CD8-positive, alpha-beta T cell (primary cell): ENCODE measurements at regions of chr1 and their contacts with region 1.

Region 1: GRCh38 chr1:2133039-2133878 is 61.3 kb downstream of the FAAP20 start:
- DNase-seq: peak; percentile 90 to 99 (median 97)
- ATAC-seq: peak; percentile 89
- H3K4me3 ChIP-seq: peak overlapping the region; percentile 51 to 61
- H3K4me3 Mint-ChIP-seq: peak overlapping the region; percentile 81
- H3K27ac ChIP-seq: peak overlapping the region; percentile 73 to 91
- H3K27ac Mint-ChIP-seq: peak overlapping the region; percentile 90
- H3K4me1 ChIP-seq: peaks cover 11% of the 10 kb centered on the region
- H3K4me1 Mint-ChIP-seq: peaks cover 31% of the 10 kb centered on the region
- H3K27me3 ChIP-seq: no peaks in the 10 kb centered on the region
- H3K27me3 Mint-ChIP-seq: no peaks in the 10 kb centered on the region
- CTCF ChIP-seq: no peak

Region 2: DNA sequence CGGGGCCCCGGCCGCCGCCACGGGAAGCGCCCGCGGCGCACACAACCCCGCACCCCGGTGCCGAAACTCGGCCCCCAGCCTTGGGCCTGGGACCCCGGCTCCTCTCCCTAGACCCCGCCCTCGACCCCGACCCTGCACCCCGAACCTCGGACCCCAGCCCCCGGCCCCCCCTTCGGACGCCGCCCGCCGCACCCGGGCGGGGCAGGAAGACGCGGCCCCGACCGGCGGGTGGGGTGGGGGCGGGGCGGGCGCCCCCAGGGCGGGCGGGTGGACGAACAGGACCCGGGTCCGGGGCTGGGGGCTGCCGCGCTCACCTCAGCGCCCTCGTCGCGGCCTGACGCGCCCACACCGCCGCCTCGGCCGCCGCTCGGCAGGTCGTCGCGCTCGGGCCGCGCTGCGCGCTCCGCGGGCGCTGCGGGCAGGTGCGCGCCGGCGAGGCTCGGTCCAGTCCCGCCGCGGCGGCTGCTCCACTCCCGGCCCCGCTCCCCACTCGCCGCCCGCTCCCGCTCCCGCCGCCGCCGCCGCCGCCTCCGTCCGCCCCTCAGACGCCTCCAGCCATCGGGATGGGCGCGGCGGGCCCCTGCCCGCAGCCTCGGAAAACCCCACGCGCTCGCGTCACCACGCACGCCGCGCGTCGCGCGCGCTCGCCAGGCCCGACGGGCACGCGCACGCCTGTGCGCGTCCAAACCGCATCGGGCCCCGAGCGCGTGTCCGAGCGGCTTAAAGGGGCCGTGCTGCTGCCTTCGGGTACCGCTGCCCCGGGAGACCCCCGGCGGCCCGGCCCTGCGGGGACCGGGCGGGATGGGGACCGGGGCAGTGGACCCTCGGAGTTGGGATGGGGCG is 242.5 kb before region 1 on chr1 and contains the start of gene GNB1:
- CTCF ChIA-PET with region 1: no interaction called
- POLR2A ChIA-PET with region 1: no interaction called
- intact Hi-C with region 1: loop called (anchors 1 kb)
- DNase-seq: peak; percentile 80 to 97 (median 87)
- ATAC-seq: peak; percentile 62
- H3K4me3 ChIP-seq: peak within 1 kb of the TSS; percentile 68 to 69
- H3K4me3 Mint-ChIP-seq: peak within 1 kb of the TSS; percentile 87
- H3K27ac ChIP-seq: peak within 1 kb of the TSS; percentile 70 to 89
- H3K27ac Mint-ChIP-seq: peak within 1 kb of the TSS; percentile 94
- H3K4me1 ChIP-seq: peaks cover 72% of the 10 kb centered on the region
- H3K4me1 Mint-ChIP-seq: peaks cover 60% of the 10 kb centered on the region
- H3K27me3 ChIP-seq: no peaks in the 10 kb centered on the region
- H3K27me3 Mint-ChIP-seq: no peaks in the 10 kb centered on the region
- CTCF ChIP-seq: no peak
- total RNA-seq, gene GNB1: 145 to 147 TPM

Region 3: DNA sequence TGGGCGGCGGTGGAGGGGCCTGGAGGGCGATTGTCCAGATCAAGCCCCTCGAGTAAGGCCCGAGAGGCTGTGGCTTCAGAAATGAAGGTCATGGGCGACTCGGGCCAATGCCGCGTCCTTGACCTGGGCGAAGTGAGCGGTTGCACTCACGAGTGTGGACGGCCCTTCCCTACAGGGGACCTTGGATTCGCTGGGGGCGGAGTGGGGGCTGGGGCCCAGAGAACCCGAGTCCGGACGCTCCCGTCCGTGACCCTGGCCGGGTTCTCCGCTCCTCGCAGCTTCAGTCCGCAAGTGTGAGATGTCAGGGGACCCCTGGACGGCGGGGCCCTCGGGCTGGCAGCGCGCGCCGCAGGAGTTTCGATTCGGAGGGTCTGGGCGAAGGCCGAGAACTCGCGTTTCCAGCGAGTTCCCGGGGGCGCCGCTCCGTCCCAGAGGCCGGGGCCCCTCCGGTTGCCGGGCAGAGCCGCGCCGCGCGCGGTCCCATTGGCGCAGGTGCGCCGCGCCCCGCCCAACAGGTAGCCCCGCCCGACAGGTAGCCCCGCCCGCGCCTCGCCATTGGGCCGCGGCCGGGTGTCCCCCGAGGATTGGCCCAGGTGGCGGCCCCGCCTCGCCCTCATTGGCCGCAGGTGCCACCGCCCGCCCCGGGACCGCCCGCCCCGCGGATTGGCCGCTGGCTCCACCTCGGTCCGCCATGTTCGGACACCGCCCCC is 83.4 kb before region 1 on chr1 and contains the start of gene PRKCZ:
- CTCF ChIA-PET with region 1: interaction called, 3 read pairs
- POLR2A ChIA-PET with region 1: no interaction called
- intact Hi-C with region 1: loop called (anchors 1 kb)
- DNase-seq: peak; percentile 90 to 98 (median 95)
- ATAC-seq: peak; percentile 97
- H3K4me3 ChIP-seq: peak within 1 kb of the TSS; percentile 76 to 88
- H3K4me3 Mint-ChIP-seq: peak within 1 kb of the TSS; percentile 80
- H3K27ac ChIP-seq: peak within 1 kb of the TSS; percentile 33 to 64
- H3K27ac Mint-ChIP-seq: no peak within 1 kb of the TSS
- H3K4me1 ChIP-seq: peaks cover 30% of the 10 kb centered on the region
- H3K4me1 Mint-ChIP-seq: peaks cover 28% of the 10 kb centered on the region
- H3K27me3 ChIP-seq: peaks cover 0 to 5% of the 10 kb centered on the region in 2 experiments
- H3K27me3 Mint-ChIP-seq: no peaks in the 10 kb centered on the region
- CTCF ChIP-seq: no peak
- total RNA-seq, gene PRKCZ: 17.1 to 19.6 TPM

Region 4: GRCh38 chr1:2174348-2175054 is 41.2 kb after region 1 on chr1:
- CTCF ChIA-PET with region 1: interaction called, 11 read pairs
- POLR2A ChIA-PET with region 1: no interaction called
- intact Hi-C with region 1: loop called in 1 of 2 experiments (anchors 1 kb)
- DNase-seq: peak in 4 of 9 experiments; percentile 25 to 62 (median 45)
- ATAC-seq: peak; percentile 56
- H3K4me3 ChIP-seq: no peak overlapping the region
- H3K4me3 Mint-ChIP-seq: no peak overlapping the region
- H3K27ac ChIP-seq: no peak overlapping the region
- H3K27ac Mint-ChIP-seq: no peak overlapping the region
- H3K4me1 ChIP-seq: no peaks in the 10 kb centered on the region
- H3K4me1 Mint-ChIP-seq: no peaks in the 10 kb centered on the region
- H3K27me3 ChIP-seq: no peaks in the 10 kb centered on the region
- H3K27me3 Mint-ChIP-seq: no peaks in the 10 kb centered on the region
- CTCF ChIP-seq: peak; percentile 63

Region 5: DNA sequence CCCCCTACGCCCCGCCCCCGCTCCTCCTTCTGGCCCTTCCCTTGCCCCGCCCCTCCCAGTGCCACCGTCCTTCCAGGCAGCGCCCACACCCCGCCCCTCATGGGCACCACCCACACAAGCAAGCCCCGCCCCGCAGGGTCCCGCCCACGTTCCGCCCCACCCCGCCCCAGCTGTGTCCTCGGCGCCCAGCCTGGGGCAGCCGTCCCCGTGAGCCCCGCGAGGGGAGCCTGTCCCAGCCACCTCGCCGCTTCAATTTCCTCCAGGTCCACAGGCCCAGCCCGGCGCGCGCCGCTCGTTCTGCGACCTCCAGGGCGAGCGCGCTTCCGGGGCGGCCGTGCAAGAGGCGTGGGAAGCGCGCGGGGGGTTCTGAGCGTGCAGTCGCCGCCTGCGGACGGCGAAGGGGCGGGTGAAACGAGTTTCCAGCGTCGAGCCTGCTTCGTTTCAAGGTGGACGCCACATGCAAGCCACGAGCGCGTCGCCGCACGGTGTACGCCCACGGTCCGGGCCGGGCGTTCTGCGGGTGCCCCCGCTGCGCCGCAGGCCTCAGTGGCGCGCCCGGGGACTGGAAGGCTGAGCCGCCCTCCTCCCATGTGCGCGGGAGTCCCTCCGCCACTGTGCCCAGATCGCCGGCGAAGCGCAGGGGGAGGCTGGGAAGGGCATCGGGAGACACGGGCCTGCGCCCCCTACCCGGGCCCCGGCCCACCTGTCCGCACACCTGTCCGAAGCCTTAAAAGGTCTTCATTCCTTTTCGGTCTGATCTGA is 72.1 kb after region 1 on chr1:
- CTCF ChIA-PET with region 1: no interaction called
- POLR2A ChIA-PET with region 1: no interaction called
- intact Hi-C with region 1: loop called (anchors 1 to 2 kb)
- DNase-seq: peak; percentile 91 to 97 (median 95)
- ATAC-seq: peak; percentile 93
- H3K4me3 ChIP-seq: peak overlapping the region; percentile 39 to 61
- H3K4me3 Mint-ChIP-seq: peak overlapping the region; percentile 69
- H3K27ac ChIP-seq: peak overlapping the region; percentile 19 to 47
- H3K27ac Mint-ChIP-seq: no peak overlapping the region
- H3K4me1 ChIP-seq: peaks cover 14% of the 10 kb centered on the region
- H3K4me1 Mint-ChIP-seq: peaks cover 8% of the 10 kb centered on the region
- H3K27me3 ChIP-seq: no peaks in the 10 kb centered on the region
- H3K27me3 Mint-ChIP-seq: no peaks in the 10 kb centered on the region
- CTCF ChIP-seq: no peak

Region 6: GRCh38 chr1:2215909-2216766 is 82.9 kb after region 1 on chr1:
- CTCF ChIA-PET with region 1: no interaction called
- POLR2A ChIA-PET with region 1: no interaction called
- intact Hi-C with region 1: no loop called
- DNase-seq: no peak
- ATAC-seq: no peak
- H3K4me3 ChIP-seq: no peak overlapping the region
- H3K4me3 Mint-ChIP-seq: no peak overlapping the region
- H3K27ac ChIP-seq: no peak overlapping the region
- H3K27ac Mint-ChIP-seq: no peak overlapping the region
- H3K4me1 ChIP-seq: peaks cover 13% of the 10 kb centered on the region
- H3K4me1 Mint-ChIP-seq: peaks cover 4% of the 10 kb centered on the region
- H3K27me3 ChIP-seq: peaks cover 0 to 6% of the 10 kb centered on the region in 2 experiments
- H3K27me3 Mint-ChIP-seq: no peaks in the 10 kb centered on the region
- CTCF ChIP-seq: no peak

Region 7: DNA sequence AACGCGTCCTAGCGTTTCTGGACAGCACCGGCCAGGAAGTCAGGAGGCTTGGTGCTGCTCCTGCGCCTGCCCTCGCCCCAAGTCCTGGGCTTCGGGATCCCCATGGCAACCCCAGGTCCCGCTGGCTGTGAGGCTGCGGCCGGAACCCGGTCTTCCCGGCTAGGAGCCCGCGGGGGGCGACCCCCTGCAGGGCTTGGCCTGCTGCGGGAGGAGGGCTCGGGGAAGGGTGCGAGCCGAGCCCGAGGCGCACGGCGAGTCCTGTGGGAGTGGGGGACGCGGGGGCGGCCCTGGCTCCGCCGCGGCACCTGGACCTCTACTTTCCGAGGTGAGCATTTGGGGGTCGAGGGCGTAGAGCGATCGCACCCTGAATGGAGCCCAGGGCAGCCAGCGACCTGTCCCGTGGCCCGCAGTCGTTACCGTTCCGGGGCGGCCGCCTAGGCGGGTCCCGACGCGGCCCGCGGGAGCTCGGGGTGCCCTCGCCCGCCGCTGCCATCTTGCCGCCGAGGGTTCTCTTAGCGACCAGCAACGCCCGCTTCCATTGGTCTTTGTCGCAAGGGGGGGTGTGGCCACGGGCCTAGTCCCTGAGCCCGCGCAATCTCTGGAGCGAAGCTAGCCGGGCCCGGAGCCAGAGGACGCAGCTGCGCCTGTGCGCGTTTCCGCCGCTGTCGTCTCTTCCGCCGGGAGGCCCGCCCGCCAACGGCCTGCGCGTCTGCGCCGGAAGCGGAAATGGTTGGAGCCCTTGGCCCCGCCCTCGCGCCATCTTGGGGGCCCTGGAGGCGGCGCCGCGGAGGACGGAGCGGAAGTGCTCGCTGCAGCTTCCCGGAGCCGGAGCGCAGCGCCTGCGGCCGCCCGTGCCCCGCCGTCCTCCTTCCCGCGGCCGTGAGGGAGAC is 258.0 kb after region 1 on chr1 and contains the starts of genes MORN1 and RER1:
- CTCF ChIA-PET with region 1: no interaction called
- POLR2A ChIA-PET with region 1: no interaction called
- intact Hi-C with region 1: loop called (anchors 1 to 5 kb)
- DNase-seq: peak; percentile 97 to 100 (median 99)
- ATAC-seq: peak; percentile 95
- H3K4me3 ChIP-seq: peak within 1 kb of the TSS; percentile 57 to 90
- H3K4me3 Mint-ChIP-seq: peak within 1 kb of the TSS; percentile 91
- H3K27ac ChIP-seq: peak within 1 kb of the TSS; percentile 67 to 70
- H3K27ac Mint-ChIP-seq: peak within 1 kb of the TSS; percentile 94
- H3K4me1 ChIP-seq: peaks cover 37% of the 10 kb centered on the region
- H3K4me1 Mint-ChIP-seq: peaks cover 30% of the 10 kb centered on the region
- H3K27me3 ChIP-seq: no peaks in the 10 kb centered on the region
- H3K27me3 Mint-ChIP-seq: no peaks in the 10 kb centered on the region
- CTCF ChIP-seq: no peak
- total RNA-seq, gene MORN1: 4.9 to 5.0 TPM
- total RNA-seq, gene RER1: 54.6 to 58.7 TPM

Region 8: GRCh38 chr1:2586154-2587070 is 453.2 kb after region 1 on chr1 and contains the start of gene PRXL2B:
- CTCF ChIA-PET with region 1: no interaction called
- POLR2A ChIA-PET with region 1: no interaction called
- intact Hi-C with region 1: loop called (anchors 2 kb)
- DNase-seq: peak; percentile 94 to 99 (median 97)
- ATAC-seq: peak; percentile 69
- H3K4me3 ChIP-seq: peak within 1 kb of the TSS; percentile 79 to 95
- H3K4me3 Mint-ChIP-seq: peak within 1 kb of the TSS; percentile 93
- H3K27ac ChIP-seq: peak within 1 kb of the TSS; percentile 95 to 98
- H3K27ac Mint-ChIP-seq: peak within 1 kb of the TSS; percentile 99
- H3K4me1 ChIP-seq: peaks cover 37% of the 10 kb centered on the region
- H3K4me1 Mint-ChIP-seq: peaks cover 40% of the 10 kb centered on the region
- H3K27me3 ChIP-seq: no peaks in the 10 kb centered on the region
- H3K27me3 Mint-ChIP-seq: no peaks in the 10 kb centered on the region
- CTCF ChIP-seq: no peak
- total RNA-seq, gene PRXL2B: 13.5 to 15.9 TPM